Caco-2 (cell line): ENCODE measurements at regions of chr16 and their contacts with region 1.

Region 1: DNA sequence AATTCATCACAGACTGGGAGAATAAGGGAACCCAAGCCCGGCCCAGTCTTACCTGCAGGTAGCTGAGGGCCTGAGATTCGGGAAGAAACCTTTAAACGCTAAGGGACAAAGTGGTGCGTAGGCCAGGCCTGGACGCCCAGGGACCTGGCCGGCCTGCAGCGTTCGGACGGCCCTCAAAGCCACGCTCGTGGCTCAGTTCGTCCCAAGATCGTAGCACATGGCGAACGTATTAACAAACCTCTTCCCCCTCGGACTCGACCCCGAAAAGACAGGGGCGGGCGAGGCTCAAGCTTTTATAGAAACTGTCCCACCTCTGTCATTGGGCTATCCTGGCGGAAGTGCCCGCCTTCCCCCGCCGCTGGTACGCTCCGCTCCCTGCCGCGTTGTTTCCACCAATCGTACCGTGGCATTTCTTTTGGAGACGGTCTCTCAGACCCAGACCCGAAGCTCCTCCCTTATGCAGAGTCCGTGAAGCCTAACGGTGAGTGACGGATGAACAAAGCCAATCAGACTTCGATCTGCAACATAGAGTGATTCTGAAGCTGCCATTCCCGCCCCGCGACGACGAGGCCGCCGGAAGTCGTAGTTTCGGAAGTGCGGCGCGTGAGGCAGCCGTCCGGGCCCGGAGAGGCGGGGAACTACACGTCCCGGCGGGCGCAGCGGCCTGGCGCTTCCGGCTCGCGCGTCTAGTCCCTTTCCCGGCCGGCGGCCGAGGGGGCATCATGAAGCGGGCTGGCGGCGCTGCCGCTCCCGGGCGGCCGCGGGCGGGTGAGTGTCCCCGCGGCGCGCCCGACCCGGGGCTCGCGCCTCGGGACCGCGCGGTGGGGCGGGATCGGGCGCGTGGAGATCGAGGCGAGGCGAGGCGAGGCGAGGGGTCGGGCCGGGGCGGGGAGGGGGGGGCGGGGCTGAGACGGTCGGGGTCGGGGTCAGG is at the start of gene TRAF7:
- DNase-seq: peak; percentile 98 to 99
- H3K4me3 ChIP-seq: peak within 1 kb of the TSS; percentile 92
- H3K4me3 Mint-ChIP-seq: peak within 1 kb of the TSS; percentile 80
- H3K27ac Mint-ChIP-seq: peak within 1 kb of the TSS; percentile 96
- H3K4me1 ChIP-seq: peaks cover 46% of the 10 kb centered on the region
- H3K4me1 Mint-ChIP-seq: peaks cover 25% of the 10 kb centered on the region
- H3K27me3 ChIP-seq: no peaks in the 10 kb centered on the region
- H3K27me3 Mint-ChIP-seq: peaks cover 3% of the 10 kb centered on the region
- CTCF ChIP-seq: no peak
- total RNA-seq, gene TRAF7: 61.4 and 66.3 TPM in 2 replicates

Region 2: DNA sequence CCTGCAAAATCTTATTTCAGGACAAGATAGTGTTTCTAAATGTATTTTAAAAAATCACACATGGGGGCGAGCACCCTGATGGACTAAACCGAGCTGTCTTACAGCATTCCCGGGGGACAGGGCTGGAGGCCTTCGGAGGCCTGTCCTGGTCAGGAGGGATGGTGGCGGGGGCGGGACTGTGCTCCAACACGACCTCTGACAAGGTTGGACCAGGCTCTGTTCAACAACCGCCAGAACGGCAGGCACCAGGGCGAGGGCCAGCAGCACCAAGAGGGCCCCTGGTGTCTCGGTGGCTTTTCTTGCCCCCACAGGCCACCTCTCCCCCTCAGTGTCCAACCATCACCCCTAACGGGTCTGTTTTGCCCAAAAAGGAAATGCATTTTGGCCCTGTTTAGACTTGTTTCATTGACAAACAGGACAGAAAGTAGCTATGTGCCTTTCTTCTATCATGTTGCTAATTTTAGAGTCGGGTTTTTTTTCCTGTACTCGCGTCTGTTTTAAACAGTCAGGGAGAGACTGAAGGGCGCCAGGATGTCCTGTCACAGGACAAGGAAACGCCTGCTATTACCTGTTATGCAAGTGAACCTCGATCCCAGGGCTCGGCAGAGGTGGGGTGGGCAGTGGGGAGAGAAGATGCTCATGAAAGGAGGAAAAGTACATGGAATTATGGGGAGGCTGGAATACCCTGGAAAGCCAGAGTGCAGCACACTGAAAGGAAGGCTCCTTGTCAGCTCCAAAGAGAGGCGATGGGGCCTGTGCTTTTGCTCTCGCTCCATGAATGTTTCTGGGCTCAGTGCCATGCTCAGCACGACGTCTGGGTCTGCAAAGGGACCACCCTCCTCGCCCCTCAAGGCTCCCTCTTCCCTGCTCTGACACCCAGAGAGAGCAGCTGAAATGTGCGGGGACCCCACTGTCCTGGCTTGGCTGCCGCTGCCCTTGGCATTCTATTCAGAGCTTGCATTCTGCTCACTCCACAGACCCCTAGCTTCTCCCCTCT is 610.0 kb before region 1 on chr16:
- CTCF ChIA-PET with region 1: no interaction called
- POLR2A ChIA-PET with region 1: no interaction called
- intact Hi-C with region 1: no loop called
- DNase-seq: no peak
- H3K4me3 ChIP-seq: no peak overlapping the region
- H3K4me3 Mint-ChIP-seq: no peak overlapping the region
- H3K27ac Mint-ChIP-seq: no peak overlapping the region
- H3K4me1 ChIP-seq: no peaks in the 10 kb centered on the region
- H3K4me1 Mint-ChIP-seq: no peaks in the 10 kb centered on the region
- H3K27me3 ChIP-seq: no peaks in the 10 kb centered on the region
- H3K27me3 Mint-ChIP-seq: no peaks in the 10 kb centered on the region
- CTCF ChIP-seq: no peak

Region 3: DNA sequence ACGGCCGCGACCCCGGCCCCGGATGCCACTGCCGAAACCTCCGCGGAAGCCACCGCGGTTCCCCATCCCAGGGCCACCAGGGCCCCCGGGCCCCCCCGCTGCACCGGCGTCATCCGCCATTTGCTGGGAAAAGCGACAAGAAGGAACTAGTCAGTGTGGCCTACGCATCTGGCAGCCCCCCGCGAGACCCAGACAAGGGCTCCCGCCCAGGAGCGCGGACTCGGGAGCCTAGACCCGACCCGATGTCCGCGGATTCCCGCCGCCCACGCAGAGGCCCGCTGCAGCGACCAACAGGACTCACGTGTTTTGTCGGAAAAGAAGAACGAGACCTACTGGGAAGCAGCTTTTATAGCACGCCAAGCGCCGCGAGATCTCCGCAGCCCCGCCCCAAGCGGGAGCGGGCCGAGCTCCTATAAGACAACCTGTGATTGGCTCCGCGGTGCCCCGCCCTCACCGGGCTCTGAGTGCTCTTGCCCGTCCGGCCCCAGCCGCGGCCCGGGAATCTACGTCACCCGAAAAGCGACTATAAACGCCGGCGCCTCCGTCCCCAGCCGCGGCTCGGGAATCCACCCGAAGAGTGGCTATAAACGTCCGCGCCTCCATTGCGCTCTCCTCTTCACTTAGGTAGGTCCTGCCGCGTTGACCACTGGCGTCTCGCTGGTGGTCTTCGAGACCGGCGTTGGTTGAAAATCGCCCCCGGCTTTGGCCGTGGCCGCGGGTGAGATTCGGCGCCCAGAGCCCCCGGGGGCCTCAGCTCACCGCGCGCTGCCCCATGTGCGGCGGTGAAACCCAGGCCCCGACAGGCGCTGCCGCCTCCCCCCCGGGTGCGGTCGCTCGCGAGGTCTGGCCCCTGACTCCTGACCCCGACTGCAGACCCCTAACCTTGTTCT is 190.6 kb before region 1 on chr16 and contains the start of gene RPS2:
- CTCF ChIA-PET with region 1: no interaction called
- POLR2A ChIA-PET with region 1: interaction called, 19 read pairs
- intact Hi-C with region 1: no loop called
- DNase-seq: peak; percentile 97 to 98
- H3K4me3 ChIP-seq: peak within 1 kb of the TSS; percentile 83
- H3K4me3 Mint-ChIP-seq: peak within 1 kb of the TSS; percentile 76
- H3K27ac Mint-ChIP-seq: peak within 1 kb of the TSS; percentile 96
- H3K4me1 ChIP-seq: peaks cover 17% of the 10 kb centered on the region
- H3K4me1 Mint-ChIP-seq: peaks cover 22% of the 10 kb centered on the region
- H3K27me3 ChIP-seq: no peaks in the 10 kb centered on the region
- H3K27me3 Mint-ChIP-seq: no peaks in the 10 kb centered on the region
- CTCF ChIP-seq: no peak
- total RNA-seq, gene RPS2: 2,961 and 3,006 TPM in 2 replicates

Region 4: DNA sequence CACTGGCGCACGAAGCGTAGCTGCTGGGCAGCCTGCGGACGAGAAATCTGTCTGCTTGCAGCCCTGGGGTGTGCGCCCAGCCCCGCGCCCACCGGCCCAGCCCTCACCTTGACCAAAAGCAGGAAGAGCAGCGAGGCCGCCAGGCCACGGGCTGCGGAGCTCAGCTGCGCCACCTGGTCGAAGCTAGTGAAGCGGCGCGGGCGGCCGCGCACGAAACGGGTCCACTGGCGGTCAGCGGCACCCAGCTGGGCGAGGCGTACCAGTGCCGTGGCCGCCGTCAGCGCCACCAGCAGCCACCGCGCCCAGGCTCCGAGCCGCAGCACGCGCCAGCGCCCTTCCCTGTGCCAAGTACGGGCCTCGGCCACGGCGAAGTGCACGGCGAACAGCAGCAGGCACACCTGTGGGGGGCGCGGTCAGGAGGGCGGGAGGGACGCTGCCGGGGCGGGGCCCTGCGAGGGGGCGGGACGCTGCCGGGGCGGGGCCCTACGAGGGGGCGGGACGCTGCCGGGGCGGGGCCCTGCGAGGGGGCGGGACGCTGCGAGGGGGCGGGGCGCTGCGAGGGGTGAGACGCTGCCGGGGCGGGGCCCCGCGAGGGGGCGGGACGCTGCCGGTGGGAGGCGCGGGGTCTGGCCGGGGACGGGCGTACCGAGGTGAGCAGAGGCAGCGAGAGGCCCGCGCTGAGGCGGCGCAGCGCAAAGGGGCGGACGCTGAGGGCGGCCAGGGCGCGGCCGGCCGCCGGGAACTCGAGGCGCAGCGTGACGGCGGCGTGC is 64.4 kb before region 1 on chr16:
- CTCF ChIA-PET with region 1: interaction called, 4 read pairs
- POLR2A ChIA-PET with region 1: interaction called, 12 read pairs
- intact Hi-C with region 1: no loop called
- DNase-seq: peak; percentile 94 to 96
- H3K4me3 ChIP-seq: peak overlapping the region; percentile 63
- H3K4me3 Mint-ChIP-seq: peak overlapping the region; percentile 70
- H3K27ac Mint-ChIP-seq: peak overlapping the region; percentile 32
- H3K4me1 ChIP-seq: peaks cover 22% of the 10 kb centered on the region
- H3K4me1 Mint-ChIP-seq: no peaks in the 10 kb centered on the region
- H3K27me3 ChIP-seq: no peaks in the 10 kb centered on the region
- H3K27me3 Mint-ChIP-seq: no peaks in the 10 kb centered on the region
- CTCF ChIP-seq: peak; percentile 35 to 69

Region 5: GRCh38 chr16:2194852-2195321 is 39.5 kb after region 1 on chr16:
- CTCF ChIA-PET with region 1: no interaction called
- POLR2A ChIA-PET with region 1: interaction called, 12 read pairs
- intact Hi-C with region 1: no loop called
- DNase-seq: peak; percentile 70 to 73
- H3K4me3 ChIP-seq: peak overlapping the region; percentile 49
- H3K4me3 Mint-ChIP-seq: peak overlapping the region; percentile 63
- H3K27ac Mint-ChIP-seq: no peak overlapping the region
- H3K4me1 ChIP-seq: peaks cover 9% of the 10 kb centered on the region
- H3K4me1 Mint-ChIP-seq: no peaks in the 10 kb centered on the region
- H3K27me3 ChIP-seq: no peaks in the 10 kb centered on the region
- H3K27me3 Mint-ChIP-seq: no peaks in the 10 kb centered on the region
- CTCF ChIP-seq: peak in 1 of 2 experiments; percentile 49

Region 6: GRCh38 chr16:2251483-2252240 is 96.3 kb after region 1 on chr16 and contains the start of gene ECI1:
- CTCF ChIA-PET with region 1: interaction called, 4 read pairs
- POLR2A ChIA-PET with region 1: interaction called, 13 read pairs
- intact Hi-C with region 1: no loop called
- DNase-seq: peak; percentile 92 to 96
- H3K4me3 ChIP-seq: peak within 1 kb of the TSS; percentile 69
- H3K4me3 Mint-ChIP-seq: peak within 1 kb of the TSS; percentile 89
- H3K27ac Mint-ChIP-seq: peak within 1 kb of the TSS; percentile 95
- H3K4me1 ChIP-seq: peaks cover 7% of the 10 kb centered on the region
- H3K4me1 Mint-ChIP-seq: peaks cover 7% of the 10 kb centered on the region
- H3K27me3 ChIP-seq: no peaks in the 10 kb centered on the region
- H3K27me3 Mint-ChIP-seq: no peaks in the 10 kb centered on the region
- CTCF ChIP-seq: peak; percentile 60 to 69
- total RNA-seq, gene ECI1: 135 and 157 TPM in 2 replicates